ENCODE measurements at regions of chr14 and their contacts with region 1.

Region 1: DNA sequence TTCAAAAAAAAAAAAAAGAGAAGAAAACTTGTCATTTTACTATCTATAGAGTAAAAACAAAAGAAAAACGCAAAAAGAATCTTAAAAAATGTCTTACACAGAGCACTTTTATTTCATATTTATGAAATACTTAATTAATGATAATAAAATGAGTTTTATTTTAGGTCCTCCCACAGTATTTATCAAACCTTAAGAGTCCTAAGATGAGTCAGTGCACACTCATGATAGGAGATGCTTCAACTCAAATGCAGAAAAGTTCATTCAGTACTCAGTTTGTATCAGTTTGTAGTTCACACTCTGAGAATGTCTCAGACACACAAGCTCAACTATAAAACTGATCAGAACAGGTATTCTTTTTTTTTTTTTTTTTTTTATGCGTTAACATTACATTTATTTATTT is 41.7 kb downstream of the TRIM9 start:
- DNase-seq: peak; percentile 33
- ATAC-seq: peak; percentile 77
- H3K4me3 ChIP-seq: no peak overlapping the region
- H3K27ac ChIP-seq: no peak overlapping the region
- H3K4me1 ChIP-seq: no peaks in the 10 kb centered on the region
- H3K27me3 ChIP-seq: no peaks in the 10 kb centered on the region
- CTCF ChIP-seq: no peak

Region 2: DNA sequence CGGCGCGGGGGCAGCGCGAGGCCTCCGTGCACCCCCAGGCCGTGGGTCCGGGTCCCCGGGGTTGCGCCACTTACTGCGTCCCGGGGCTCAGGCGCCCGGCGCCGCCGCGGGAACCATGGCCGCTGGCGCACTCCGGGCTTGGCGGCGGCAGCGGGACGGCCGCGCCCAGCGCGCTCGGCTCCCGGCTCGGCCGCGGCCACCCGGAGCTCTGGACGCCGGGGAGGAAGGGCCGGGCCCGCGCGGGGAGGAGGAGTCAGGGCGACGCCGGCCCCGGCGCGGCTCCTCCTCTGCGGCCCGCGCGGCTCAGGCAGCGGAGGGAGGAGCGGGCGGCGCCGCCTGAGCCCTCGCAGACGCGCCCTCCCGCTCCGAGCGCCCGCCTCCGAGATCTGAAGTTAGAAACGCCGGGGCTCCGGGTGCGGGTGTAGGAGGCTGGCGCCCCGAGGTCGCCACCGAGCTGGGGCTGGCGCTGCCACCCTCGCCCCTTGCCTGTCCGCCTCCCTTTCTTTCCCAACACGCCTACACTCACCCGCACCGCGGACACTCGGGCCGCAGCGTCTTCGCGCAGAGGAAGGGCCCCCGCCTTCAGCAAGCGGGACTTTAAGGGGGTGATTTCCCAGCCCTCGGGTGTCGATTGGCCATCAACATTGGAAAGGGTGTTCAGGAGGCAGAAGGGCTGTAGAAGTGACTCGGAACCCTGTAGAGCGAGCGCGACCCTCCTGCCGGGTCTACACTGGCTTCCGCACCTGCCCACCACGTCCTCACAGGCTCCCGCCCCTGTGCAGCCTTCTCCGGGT is 222.0 kb before region 1 on chr14 and contains the start of gene NIN:
- CTCF ChIA-PET with region 1: no interaction called
- POLR2A ChIA-PET with region 1: no interaction called
- intact Hi-C with region 1: no loop called
- DNase-seq: peak; percentile 92
- ATAC-seq: peak; percentile 93
- H3K4me3 ChIP-seq: peak within 1 kb of the TSS; percentile 86
- H3K27ac ChIP-seq: no peak within 1 kb of the TSS
- H3K4me1 ChIP-seq: peaks cover 23% of the 10 kb centered on the region
- H3K27me3 ChIP-seq: no peaks in the 10 kb centered on the region
- CTCF ChIP-seq: no peak
- total RNA-seq, gene NIN: 34.3 and 40.1 TPM in 2 replicates

Region 3: DNA sequence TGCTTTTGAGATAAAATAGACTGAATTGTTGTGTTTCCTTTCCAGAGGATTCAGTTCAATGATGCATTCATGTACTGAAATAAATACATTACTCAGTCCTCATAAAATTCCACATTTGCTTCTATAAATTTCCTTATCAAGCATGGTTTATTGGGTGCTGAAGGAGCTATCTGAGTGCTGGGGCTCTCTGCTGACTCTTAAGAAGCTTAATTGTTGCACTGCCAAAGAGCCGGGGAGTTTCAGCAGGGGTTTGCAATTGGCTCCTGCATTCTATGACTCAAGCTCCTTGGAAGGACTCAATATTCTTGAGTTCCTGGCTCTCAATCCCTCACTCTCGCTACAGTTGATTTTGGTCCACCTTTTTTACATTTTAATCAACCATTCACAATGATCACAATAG is 39.1 kb before region 1 on chr14:
- CTCF ChIA-PET with region 1: no interaction called
- POLR2A ChIA-PET with region 1: no interaction called
- intact Hi-C with region 1: loop called (anchors 2 kb)
- DNase-seq: peak; percentile 89
- ATAC-seq: peak; percentile 92
- H3K4me3 ChIP-seq: peak overlapping the region; percentile 26; the same call in 1 of the 2 replicates
- H3K27ac ChIP-seq: peak overlapping the region; percentile 91
- H3K4me1 ChIP-seq: peaks cover 21% of the 10 kb centered on the region
- H3K27me3 ChIP-seq: no peaks in the 10 kb centered on the region
- CTCF ChIP-seq: no peak